CD14-positive monocyte (primary cell): ENCODE measurements at regions of chrX and their contacts with region 1.

Region 1: DNA sequence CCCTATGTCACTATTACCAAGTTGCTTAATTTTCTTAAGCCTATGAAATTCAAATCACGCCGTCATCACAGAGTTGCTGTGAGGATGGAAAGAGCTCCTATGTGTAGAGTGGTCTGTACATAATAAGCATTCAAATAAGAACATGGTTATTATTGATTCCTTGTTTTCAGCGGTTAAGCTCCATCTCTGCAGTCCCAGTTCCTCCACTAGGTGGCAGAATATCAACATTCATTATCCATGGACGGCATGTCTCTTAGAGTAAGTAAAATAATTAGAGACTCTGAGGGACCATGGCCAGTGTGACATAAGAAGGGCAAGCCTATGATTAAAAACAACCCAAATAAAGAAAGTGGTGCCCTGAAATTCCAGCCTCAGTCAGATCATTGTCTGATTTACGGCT is 132.5 kb upstream of the NHS start:
- DNase-seq: peak; percentile 12 to 33 (median 16)
- H3K4me3 ChIP-seq: no peak overlapping the region
- H3K4me3 Mint-ChIP-seq: no peak overlapping the region
- H3K27ac ChIP-seq: no peak overlapping the region
- H3K27ac Mint-ChIP-seq: no peak overlapping the region
- H3K4me1 ChIP-seq: no peaks in the 10 kb centered on the region
- H3K4me1 Mint-ChIP-seq: no peaks in the 10 kb centered on the region
- H3K27me3 ChIP-seq: peaks cover 0 to 4% of the 10 kb centered on the region in 2 donors
- H3K27me3 Mint-ChIP-seq: peaks cover 0 to 6% (median 2%) of the 10 kb centered on the region in 3 donors
- CTCF ChIP-seq: peak; percentile 72

Region 2: DNA sequence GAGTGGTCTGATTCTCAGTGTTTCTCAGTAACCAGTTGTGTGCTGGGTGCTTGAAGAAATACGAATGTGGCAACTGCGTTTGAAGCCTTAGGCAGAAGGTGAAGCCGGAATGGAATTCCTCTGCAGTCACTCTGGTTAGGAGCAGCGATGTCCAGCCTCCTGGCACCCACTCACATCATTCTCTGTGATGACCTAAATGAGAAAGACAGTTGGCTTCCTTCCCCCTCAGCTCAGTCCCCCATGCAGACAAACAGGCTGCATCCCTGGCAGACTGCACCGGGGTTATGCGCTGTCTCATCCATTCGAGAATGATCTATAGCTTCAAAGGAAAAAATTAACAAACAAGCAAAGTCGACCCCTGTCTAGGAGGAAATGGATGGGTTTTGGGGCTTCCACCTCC is 324.7 kb after region 1 on chrX:
- intact Hi-C with region 1: no loop called
- DNase-seq: no peak
- H3K4me3 ChIP-seq: no peak overlapping the region
- H3K4me3 Mint-ChIP-seq: no peak overlapping the region
- H3K27ac ChIP-seq: no peak overlapping the region
- H3K27ac Mint-ChIP-seq: peak overlapping the region in 1 of 7 donors; percentile 71
- H3K4me1 ChIP-seq: peaks cover 25 to 29% of the 10 kb centered on the region in 2 donors
- H3K4me1 Mint-ChIP-seq: peaks cover 32% of the 10 kb centered on the region
- H3K27me3 ChIP-seq: no peaks in the 10 kb centered on the region
- H3K27me3 Mint-ChIP-seq: peaks cover 2 to 11% (median 5%) of the 10 kb centered on the region in 3 donors
- CTCF ChIP-seq: no peak

Region 3: GRCh38 chrX:17580539-17581152 is 338.2 kb after region 1 on chrX:
- intact Hi-C with region 1: loop called in 1 of 2 experiments (anchors 10 kb)
- DNase-seq: no peak
- H3K4me3 ChIP-seq: no peak overlapping the region
- H3K4me3 Mint-ChIP-seq: no peak overlapping the region
- H3K27ac ChIP-seq: no peak overlapping the region
- H3K27ac Mint-ChIP-seq: peak overlapping the region in 1 of 7 donors; percentile 38
- H3K4me1 ChIP-seq: peaks cover 24 to 26% of the 10 kb centered on the region in 2 donors
- H3K4me1 Mint-ChIP-seq: peaks cover 30% of the 10 kb centered on the region
- H3K27me3 ChIP-seq: peaks cover 6 to 16% of the 10 kb centered on the region in 2 donors
- H3K27me3 Mint-ChIP-seq: peaks cover 2 to 25% (median 14%) of the 10 kb centered on the region in 3 donors
- CTCF ChIP-seq: no peak

Region 4: DNA sequence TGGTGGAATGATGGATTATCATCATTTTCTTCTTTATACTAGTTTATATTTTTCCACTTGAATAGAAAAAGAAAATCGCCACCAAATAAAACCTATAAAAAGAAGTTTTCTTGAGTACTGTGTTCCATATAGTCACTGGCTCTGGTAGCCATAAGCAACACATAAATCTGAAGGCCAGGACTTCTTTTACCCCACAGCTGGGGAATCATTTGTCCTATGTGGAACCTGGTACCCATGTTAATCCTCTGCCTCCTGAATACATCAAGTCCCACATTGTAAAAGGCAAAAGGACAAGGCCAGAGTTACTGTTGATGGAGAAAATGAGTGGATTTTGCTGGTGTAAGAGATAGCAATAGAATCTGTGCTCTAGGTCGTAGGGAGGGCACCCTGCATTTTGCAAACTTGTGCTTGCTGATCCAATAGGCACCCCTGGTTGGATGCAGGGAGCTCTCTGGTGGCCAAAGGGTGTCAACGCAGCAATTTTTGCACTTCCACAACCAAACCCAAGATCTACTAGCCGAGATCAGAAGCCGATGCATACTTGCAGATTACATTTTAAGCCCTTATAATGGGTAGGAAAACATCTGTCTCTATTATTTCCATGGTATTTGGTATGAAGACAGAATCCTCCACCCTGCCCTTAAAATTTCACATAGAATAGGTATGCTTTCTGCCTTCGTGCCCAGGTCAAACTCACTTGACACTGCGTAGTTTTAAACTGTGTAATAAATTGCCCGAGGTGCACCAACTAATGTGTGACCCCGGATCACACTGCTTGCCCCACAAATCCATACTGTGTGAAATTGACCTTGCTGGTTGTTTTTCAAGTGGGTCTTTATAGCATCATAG is 348.6 kb after region 1 on chrX:
- intact Hi-C with region 1: loop called (anchors 5 to 10 kb)
- DNase-seq: peak; percentile 29 to 44 (median 43)
- H3K4me3 ChIP-seq: no peak overlapping the region
- H3K4me3 Mint-ChIP-seq: peak overlapping the region in 1 of 2 donors; percentile 48
- H3K27ac ChIP-seq: no peak overlapping the region
- H3K27ac Mint-ChIP-seq: no peak overlapping the region
- H3K4me1 ChIP-seq: no peaks in the 10 kb centered on the region
- H3K4me1 Mint-ChIP-seq: peaks cover 24% of the 10 kb centered on the region
- H3K27me3 ChIP-seq: peaks cover 0 to 5% of the 10 kb centered on the region in 2 donors
- H3K27me3 Mint-ChIP-seq: peaks cover 0 to 9% (median 0%) of the 10 kb centered on the region in 3 donors
- CTCF ChIP-seq: peak; percentile 67

Region 5: DNA sequence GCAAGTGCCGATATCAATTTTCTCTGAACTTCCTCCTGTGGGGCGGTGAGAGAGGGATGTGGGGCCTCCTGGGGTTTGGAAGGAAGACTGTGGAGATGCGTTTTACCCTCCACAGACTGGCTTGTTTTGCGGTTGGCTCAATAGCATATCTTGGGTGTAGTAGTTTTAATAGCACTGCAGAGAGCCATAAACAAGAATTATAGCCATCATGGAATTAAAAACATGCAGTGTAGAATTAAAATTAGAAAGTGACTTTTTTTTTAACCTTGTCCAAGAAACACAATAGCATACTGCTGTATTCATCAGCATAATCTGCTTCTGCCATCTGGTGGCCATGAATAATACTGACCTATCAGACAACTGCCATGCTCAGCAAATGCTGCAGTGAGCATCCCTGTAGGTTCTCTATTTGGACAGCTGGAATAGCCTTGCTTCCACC is 447.5 kb after region 1 on chrX:
- intact Hi-C with region 1: loop called (anchors 10 kb)
- DNase-seq: peak; percentile 25 to 55 (median 42)
- H3K4me3 ChIP-seq: no peak overlapping the region
- H3K4me3 Mint-ChIP-seq: peak overlapping the region; percentile 15 to 42
- H3K27ac ChIP-seq: no peak overlapping the region
- H3K27ac Mint-ChIP-seq: peak overlapping the region in 2 of 7 donors; percentile 5 to 50
- H3K4me1 ChIP-seq: peaks cover 0 to 4% of the 10 kb centered on the region in 2 donors
- H3K4me1 Mint-ChIP-seq: peaks cover 8% of the 10 kb centered on the region
- H3K27me3 ChIP-seq: no peaks in the 10 kb centered on the region
- H3K27me3 Mint-ChIP-seq: peaks cover 0 to 8% (median 1%) of the 10 kb centered on the region in 3 donors
- CTCF ChIP-seq: peak; percentile 59